ENCODE measurements at regions of chr3 and their contacts with region 1.

Region 1: GRCh38 chr3:141441381-141442364 is 45.2 kb upstream of the RASA2 start:
- DNase-seq: peak; percentile 60
- ATAC-seq: peak; percentile 100
- H3K4me3 Mint-ChIP-seq: peak overlapping the region; percentile 20
- H3K27ac Mint-ChIP-seq: peak overlapping the region; percentile 69
- H3K4me1 Mint-ChIP-seq: peaks cover 29% of the 10 kb centered on the region
- H3K27me3 Mint-ChIP-seq: no peaks in the 10 kb centered on the region
- CTCF ChIP-seq: peak; percentile 63

Region 2: GRCh38 chr3:141303481-141304223 is 138.0 kb before region 1 on chr3:
- CTCF ChIA-PET with region 1: interaction called, 10 read pairs
- POLR2A ChIA-PET with region 1: no interaction called
- intact Hi-C with region 1: loop called (anchors 1 kb)
- DNase-seq: no peak
- ATAC-seq: peak; percentile 88
- H3K4me3 Mint-ChIP-seq: no peak overlapping the region
- H3K27ac Mint-ChIP-seq: no peak overlapping the region
- H3K4me1 Mint-ChIP-seq: peaks cover 2% of the 10 kb centered on the region
- H3K27me3 Mint-ChIP-seq: no peaks in the 10 kb centered on the region
- CTCF ChIP-seq: no peak

Region 3: GRCh38 chr3:141360888-141361598 is 80.6 kb before region 1 on chr3:
- CTCF ChIA-PET with region 1: interaction called, 20 read pairs
- POLR2A ChIA-PET with region 1: no interaction called
- intact Hi-C with region 1: loop called (anchors 1 kb)
- DNase-seq: no peak
- ATAC-seq: peak; percentile 49
- H3K4me3 Mint-ChIP-seq: peak overlapping the region; percentile 13
- H3K27ac Mint-ChIP-seq: no peak overlapping the region
- H3K4me1 Mint-ChIP-seq: peaks cover 7% of the 10 kb centered on the region
- H3K27me3 Mint-ChIP-seq: peaks cover 3% of the 10 kb centered on the region
- CTCF ChIP-seq: no peak

Region 4: GRCh38 chr3:141370065-141370533 is 71.6 kb before region 1 on chr3:
- CTCF ChIA-PET with region 1: interaction called, 28 read pairs
- POLR2A ChIA-PET with region 1: interaction called, 5 read pairs
- intact Hi-C with region 1: loop called (anchors 1 kb)
- DNase-seq: no peak
- ATAC-seq: peak; percentile 99
- H3K4me3 Mint-ChIP-seq: no peak overlapping the region
- H3K27ac Mint-ChIP-seq: peak overlapping the region; percentile 15
- H3K4me1 Mint-ChIP-seq: peaks cover 13% of the 10 kb centered on the region
- H3K27me3 Mint-ChIP-seq: no peaks in the 10 kb centered on the region
- CTCF ChIP-seq: no peak

Region 5: GRCh38 chr3:141402476-141403171 is 39.0 kb before region 1 on chr3:
- CTCF ChIA-PET with region 1: interaction called, 3 read pairs
- POLR2A ChIA-PET with region 1: no interaction called
- intact Hi-C with region 1: loop called (anchors 5 kb)
- DNase-seq: peak; percentile 63
- ATAC-seq: peak; percentile 67
- H3K4me3 Mint-ChIP-seq: peak overlapping the region; percentile 91
- H3K27ac Mint-ChIP-seq: peak overlapping the region; percentile 89
- H3K4me1 Mint-ChIP-seq: peaks cover 56% of the 10 kb centered on the region
- H3K27me3 Mint-ChIP-seq: no peaks in the 10 kb centered on the region
- CTCF ChIP-seq: no peak

Region 6: DNA sequence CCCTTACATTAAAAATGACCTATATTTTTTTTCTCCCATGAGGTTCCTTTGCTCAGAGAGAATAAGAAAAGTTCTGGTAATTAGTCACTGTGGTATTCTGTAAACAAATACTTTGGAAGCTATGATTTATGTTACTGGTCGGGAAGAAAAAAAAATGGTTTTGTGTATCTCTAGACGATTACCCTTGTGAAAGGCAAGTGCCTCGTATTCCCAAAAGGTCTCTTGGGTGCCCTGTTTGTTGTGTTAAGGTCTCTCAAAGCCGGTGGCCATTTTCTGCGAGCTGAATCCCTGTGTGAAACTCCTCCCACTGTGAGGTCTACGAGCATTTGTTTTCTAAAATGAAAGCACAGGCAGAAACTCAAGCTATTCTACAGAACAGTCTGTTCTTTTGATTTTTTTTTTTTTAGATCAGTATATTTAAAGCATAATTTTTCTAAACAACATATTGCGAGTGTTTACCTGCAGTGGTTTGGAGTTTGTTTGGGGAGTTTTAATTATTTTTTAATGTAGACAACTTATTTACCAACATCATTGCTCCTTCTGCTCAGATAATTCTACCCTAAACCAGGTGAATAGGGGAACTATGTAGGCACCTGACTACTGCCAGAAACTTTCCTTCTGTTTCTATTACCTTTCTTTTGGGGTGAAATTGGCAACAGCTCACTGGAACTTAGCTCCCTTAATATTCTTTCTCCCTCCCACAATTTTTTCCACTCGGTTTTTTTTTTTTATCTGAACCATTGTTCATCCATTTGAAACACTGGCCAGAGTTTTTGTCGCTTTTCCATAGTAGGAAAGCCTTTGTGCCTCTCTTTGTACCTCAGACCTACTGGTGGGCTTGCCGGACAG is 29.4 kb before region 1 on chr3:
- CTCF ChIA-PET with region 1: no interaction called
- POLR2A ChIA-PET with region 1: interaction called, 9 read pairs
- intact Hi-C with region 1: loop called (anchors 1 kb)
- DNase-seq: no peak
- ATAC-seq: peak; percentile 75
- H3K4me3 Mint-ChIP-seq: peak overlapping the region; percentile 86
- H3K27ac Mint-ChIP-seq: peak overlapping the region; percentile 97
- H3K4me1 Mint-ChIP-seq: peaks cover 44% of the 10 kb centered on the region
- H3K27me3 Mint-ChIP-seq: no peaks in the 10 kb centered on the region
- CTCF ChIP-seq: no peak